PC-9 (cell line): ENCODE measurements at regions of chr3 and their contacts with region 1.

Region 1: DNA sequence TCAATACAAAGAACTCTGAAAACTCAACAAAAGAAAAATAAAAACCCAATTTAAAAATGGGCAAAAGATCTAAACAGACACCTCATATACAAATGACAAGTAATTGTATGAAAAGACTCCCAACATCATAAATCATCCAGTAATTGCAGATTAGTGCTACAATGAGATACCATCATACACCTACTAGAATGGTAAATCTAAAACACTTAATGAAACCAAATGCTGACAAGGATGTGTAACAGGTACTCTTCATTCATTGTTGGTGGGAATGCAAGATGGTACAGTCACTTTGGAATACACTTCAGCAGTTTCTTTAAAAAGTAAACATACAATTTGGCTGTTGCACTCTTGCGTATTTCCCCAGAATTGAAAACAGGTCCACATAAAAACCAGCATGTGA is 68.4 kb downstream of the LHFPL4 start:
- DNase-seq: no peak
- H3K4me3 ChIP-seq: no peak overlapping the region
- H3K27ac ChIP-seq: no peak overlapping the region
- H3K4me1 ChIP-seq: no peaks in the 10 kb centered on the region
- H3K27me3 ChIP-seq: no peaks in the 10 kb centered on the region
- CTCF ChIP-seq: no peak

Region 2: GRCh38 chr3:10242182-10243065 is 757.2 kb after region 1 on chr3:
- CTCF ChIA-PET with region 1: interaction called, 13 read pairs
- POLR2A ChIA-PET with region 1: no interaction called
- intact Hi-C with region 1: no loop called
- DNase-seq: no peak
- H3K4me3 ChIP-seq: no peak overlapping the region
- H3K27ac ChIP-seq: no peak overlapping the region
- H3K4me1 ChIP-seq: no peaks in the 10 kb centered on the region
- H3K27me3 ChIP-seq: no peaks in the 10 kb centered on the region
- CTCF ChIP-seq: no peak